Posterior vena cava (tissue), 2 donors: ENCODE measurements at regions of chr12 and their contacts with region 1.

Region 1: DNA sequence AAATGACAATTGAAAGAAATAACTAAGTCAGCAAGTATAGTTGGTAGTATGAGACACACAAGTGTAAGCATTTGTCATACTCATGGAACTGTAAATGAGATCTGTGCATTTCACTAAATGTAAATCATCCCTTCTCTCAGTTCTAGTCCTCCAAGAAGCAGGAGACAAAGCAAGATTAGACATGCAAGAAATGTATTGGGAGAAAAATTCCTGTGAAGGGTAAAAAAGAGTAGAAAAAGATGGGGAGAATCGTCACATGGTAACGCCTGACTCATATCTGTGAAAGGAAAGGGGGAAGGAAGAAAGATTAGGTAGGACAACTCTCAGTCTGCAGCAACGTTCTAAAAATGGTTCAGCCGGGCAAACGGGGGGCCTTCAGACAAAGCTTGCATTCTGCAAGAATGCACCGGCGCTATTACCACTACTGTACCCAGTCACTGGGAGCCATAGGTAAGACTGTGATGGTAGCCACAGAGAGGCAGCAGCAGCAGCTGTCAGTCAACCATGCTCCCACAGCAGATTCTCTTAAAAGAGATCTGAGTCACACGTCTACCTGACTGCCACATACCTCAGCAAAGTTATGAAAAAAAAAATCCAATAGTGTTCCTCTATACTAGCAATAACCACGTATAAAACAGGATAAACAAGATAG is 18.0 kb upstream of the RFX4 start:
- DNase-seq: no peak

Region 2: GRCh38 chr12:106170285-106170684 is 394.5 kb before region 1 on chr12:
- intact Hi-C with region 1: no loop called
- DNase-seq: no peak

Region 3: GRCh38 chr12:106801830-106802533 is 237.2 kb after region 1 on chr12:
- intact Hi-C with region 1: loop called in 1 of 2 experiments (anchors 10 kb)
- DNase-seq: no peak